ENCODE measurements at regions of chr11 and their contacts with region 1.

Region 1: DNA sequence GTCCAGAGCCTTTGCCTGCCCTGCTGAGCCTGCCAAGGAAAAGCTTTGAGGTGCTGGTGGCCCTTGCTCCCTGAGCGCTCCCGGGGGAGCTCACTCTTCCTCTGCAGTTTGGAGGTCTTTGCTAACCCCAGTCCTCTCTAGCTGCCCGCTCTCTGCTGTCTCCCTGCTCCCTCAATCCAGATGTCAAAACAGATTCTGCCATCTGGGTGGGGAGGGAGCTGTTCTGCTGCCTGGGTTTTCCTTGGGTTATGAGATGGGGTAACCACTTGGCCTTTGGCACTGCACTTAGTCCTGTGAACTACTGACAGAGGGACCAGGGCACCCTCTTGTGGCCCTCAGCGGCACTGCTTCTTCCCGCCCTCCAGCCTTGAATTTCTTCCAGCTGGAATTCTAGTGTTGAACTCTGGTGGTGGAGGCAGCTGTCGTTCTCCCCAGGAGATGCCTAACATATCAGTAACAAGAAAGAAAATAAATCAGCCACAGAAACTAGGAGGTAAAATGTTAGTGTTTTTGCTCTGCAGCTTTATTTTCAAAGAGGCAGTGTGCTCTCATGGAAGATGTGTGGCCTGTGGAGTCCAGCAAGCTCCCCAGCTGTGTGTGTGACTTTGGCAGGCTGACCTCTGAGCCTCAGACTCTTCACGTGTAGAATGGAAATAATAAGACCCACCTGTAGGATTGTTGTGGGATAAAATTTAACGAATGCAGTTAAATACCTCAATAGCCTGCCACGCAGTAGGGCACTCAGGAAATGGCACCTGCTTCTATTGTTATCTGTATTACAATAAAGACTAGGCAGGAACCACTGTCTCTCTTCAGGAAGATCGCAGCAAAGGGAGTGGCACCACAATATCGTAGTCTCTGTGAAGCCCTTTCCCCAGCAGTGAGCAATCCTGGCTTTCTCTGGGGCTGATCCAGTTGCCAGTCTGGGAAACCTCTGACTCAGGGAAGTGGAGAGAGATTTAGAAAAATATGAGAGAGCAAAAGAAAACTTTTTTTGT is 23.4 kb downstream of the ARFGAP2 start:
- DNase-seq: peak; percentile 79
- ATAC-seq: peak; percentile 77

Region 2: GRCh38 chr11:46889689-46890475 is 263.4 kb before region 1 on chr11:
- intact Hi-C with region 1: loop called (anchors 1 kb)
- DNase-seq: no peak
- ATAC-seq: peak; percentile 83

Region 3: DNA sequence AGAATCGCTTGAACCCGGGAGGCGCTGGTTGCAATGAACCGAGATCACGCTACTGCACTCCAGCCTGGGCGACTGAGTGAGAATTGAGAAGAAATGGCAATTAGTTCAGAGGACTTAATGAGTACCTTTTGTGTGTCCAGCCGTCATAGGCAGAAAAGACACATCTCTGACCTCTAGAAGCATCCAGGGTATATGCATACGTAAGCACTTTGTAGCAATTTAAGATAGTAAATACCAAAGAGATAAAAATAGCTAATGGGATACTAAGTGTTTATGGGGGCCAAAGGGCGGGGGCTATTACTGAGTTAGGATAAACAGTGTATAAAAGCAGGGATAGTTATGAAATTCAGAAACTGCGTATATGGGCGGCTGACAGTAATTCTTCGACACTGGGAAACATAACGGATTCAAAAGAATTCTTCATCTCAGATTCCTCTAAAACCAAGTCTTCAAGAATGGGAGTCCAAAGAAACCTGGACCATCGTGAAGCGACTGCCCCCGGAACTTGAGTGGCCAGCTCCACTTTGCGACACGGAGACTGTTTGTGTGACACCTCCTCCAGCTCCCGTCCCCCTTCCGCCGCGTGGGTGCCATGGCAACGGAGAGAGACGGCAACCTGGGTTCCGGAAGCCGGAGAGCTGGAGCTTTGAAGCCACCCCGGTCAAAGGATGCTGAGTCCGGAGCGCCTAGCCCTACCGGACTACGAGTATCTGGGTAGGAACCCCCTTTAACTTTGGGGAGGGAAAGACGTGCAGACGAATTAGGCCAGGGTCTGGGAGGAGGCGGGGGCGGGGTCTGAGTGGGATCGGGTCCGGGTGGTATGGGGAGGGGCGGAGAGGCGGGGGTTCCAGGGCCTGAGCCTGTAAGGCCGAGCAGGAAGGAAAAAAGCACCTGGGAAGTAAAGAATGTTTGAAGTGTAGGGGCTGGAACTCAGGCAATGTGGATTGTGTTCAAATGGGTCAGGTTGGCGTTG is 216.8 kb before region 1 on chr11 and contains the start of gene CSTPP1:
- intact Hi-C with region 1: loop called (anchors 5 kb)
- DNase-seq: peak; percentile 96
- ATAC-seq: peak; percentile 95
- total RNA-seq, gene CSTPP1: 11.0 TPM

Measured in Right ventricle myocardium inferior (tissue), 1 donor.